IMR-90 (cell line): ENCODE measurements at regions of chr1 and their contacts with region 1.

Region 1: GRCh38 chr1:232012773-232013386 is 386.3 kb downstream of the DISC1 start:
- DNase-seq: peak; percentile 96
- ATAC-seq: peak; percentile 70
- H3K4me3 ChIP-seq: no peak overlapping the region
- H3K27ac ChIP-seq: peak overlapping the region; percentile 2; the same call in 1 of the 2 replicates
- H3K4me1 ChIP-seq: peaks cover 16% of the 10 kb centered on the region
- H3K27me3 ChIP-seq: no peaks in the 10 kb centered on the region
- CTCF ChIP-seq: no peak
- POLR2A ChIP-seq: no peak
- RAD21 ChIP-seq: no peak

Region 2: GRCh38 chr1:231663211-231663792 is 349.6 kb before region 1 on chr1:
- CTCF ChIA-PET with region 1: no interaction called
- POLR2A ChIA-PET with region 1: no interaction called
- dilution Hi-C with region 1: no loop called
- in situ Hi-C with region 1: no loop called
- intact Hi-C with region 1: no loop called
- DNase-seq: peak; percentile 46
- ATAC-seq: no peak
- H3K4me3 ChIP-seq: no peak overlapping the region
- H3K27ac ChIP-seq: no peak overlapping the region
- H3K4me1 ChIP-seq: peaks cover 3% of the 10 kb centered on the region
- H3K27me3 ChIP-seq: no peaks in the 10 kb centered on the region
- CTCF ChIP-seq: no peak
- POLR2A ChIP-seq: no peak
- RAD21 ChIP-seq: no peak

Region 3: DNA sequence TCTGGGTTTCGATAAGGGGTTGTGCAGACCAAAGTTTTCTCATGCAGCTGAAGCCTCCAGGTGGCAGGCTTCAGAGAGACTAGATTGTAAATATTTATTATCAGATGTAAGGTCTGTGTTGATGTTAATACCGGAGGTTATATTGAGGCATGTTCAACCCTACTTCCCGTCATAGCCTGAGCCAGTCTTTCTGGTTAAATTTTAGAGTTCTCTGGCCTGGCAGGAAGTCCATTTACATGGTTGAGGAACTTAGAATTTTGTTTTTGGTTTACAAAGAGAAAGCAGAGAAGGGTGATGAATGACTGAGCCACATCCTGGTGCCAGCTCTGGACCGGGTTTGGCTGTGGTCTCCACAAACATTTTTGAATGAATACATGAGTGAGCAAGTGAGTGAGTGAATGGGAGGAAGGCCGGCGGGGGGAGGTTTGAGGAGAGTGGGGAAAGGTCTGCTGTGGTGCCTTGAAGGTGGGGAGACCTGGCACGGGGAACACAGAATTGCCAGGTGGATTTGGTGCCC is 167.8 kb before region 1 on chr1:
- CTCF ChIA-PET with region 1: no interaction called
- POLR2A ChIA-PET with region 1: no interaction called
- dilution Hi-C with region 1: no loop called
- in situ Hi-C with region 1: no loop called
- intact Hi-C with region 1: no loop called
- DNase-seq: peak; percentile 61
- ATAC-seq: peak; percentile 81
- H3K4me3 ChIP-seq: no peak overlapping the region
- H3K27ac ChIP-seq: peak overlapping the region; percentile 54
- H3K4me1 ChIP-seq: peaks cover 11% of the 10 kb centered on the region
- H3K27me3 ChIP-seq: no peaks in the 10 kb centered on the region
- CTCF ChIP-seq: no peak
- POLR2A ChIP-seq: no peak
- RAD21 ChIP-seq: no peak

Region 4: DNA sequence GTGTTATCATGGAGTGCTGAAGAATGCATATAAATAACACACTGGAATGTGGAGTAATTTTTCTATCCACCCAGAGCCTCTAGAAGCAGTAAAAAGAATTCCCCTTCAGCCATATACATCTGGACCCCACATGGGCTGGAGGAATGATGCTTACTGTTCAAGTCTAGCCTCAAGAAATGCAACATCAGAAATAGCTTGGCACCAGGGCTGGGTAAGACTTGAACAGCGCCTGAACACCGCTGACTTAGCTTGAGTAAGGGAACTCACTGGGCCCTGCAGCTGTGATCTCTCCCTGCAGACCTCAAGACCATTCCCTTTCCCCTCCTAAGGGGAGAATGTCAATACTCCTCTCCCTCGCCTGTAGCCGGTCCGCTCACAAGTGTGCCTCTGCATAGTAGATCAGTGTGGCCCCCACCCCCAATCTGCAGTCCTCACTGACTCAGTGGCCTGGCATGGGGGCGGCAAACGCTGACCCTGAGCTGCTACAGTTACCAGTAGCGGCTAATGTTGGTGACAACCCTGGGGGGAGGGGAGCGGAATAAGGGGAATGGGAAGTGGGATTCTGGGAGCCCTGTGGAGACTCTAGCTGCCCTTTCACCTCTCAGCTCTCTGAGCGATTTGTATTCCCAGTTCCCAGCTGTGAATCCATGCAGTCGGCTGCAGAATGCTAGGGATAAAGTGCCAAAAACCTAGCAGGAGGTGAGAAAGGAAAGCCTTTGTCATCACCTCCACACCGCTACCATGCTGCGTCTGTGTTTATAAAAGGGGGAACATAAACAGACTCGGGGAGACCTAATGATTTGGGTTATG is 97.6 kb after region 1 on chr1:
- CTCF ChIA-PET with region 1: no interaction called
- POLR2A ChIA-PET with region 1: no interaction called
- dilution Hi-C with region 1: no loop called
- in situ Hi-C with region 1: no loop called
- intact Hi-C with region 1: loop called (anchors 1 kb)
- DNase-seq: peak; percentile 81
- ATAC-seq: peak; percentile 80
- H3K4me3 ChIP-seq: no peak overlapping the region
- H3K27ac ChIP-seq: no peak overlapping the region
- H3K4me1 ChIP-seq: no peaks in the 10 kb centered on the region
- H3K27me3 ChIP-seq: peaks cover 4% of the 10 kb centered on the region; the same call in 1 of the 2 replicates
- CTCF ChIP-seq: no peak
- POLR2A ChIP-seq: no peak
- RAD21 ChIP-seq: no peak